GM13977 (cell line): ENCODE measurements at regions of chr3 and their contacts with region 1.

Region 1: DNA sequence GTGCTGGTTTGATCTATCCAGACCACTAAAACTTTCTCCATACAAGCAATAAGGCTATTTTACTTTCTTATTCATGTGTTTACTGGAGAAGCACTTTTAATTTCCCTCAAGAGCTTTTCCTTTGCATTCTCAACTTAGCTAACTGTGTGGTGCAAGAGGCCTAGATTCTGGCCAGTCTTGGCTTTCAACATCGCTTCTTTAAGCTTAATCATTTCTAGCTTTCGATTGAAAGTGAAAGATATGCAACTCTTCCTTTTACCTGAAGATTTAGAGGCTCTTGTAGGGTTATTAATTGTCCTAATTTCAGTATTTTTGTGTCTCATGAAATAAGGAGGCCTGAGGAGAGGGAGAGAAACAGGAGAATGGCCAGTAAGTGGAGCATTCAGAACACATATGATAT is 234.8 kb upstream of the GADL1 start:
- DNase-seq: no peak
- CTCF ChIP-seq: no peak

Region 2: GRCh38 chr3:30768703-30769685 is 360.2 kb before region 1 on chr3:
- in situ Hi-C with region 1: loop called (anchors 10 kb)
- DNase-seq: peak; percentile 30
- CTCF ChIP-seq: peak; percentile 80

Region 3: DNA sequence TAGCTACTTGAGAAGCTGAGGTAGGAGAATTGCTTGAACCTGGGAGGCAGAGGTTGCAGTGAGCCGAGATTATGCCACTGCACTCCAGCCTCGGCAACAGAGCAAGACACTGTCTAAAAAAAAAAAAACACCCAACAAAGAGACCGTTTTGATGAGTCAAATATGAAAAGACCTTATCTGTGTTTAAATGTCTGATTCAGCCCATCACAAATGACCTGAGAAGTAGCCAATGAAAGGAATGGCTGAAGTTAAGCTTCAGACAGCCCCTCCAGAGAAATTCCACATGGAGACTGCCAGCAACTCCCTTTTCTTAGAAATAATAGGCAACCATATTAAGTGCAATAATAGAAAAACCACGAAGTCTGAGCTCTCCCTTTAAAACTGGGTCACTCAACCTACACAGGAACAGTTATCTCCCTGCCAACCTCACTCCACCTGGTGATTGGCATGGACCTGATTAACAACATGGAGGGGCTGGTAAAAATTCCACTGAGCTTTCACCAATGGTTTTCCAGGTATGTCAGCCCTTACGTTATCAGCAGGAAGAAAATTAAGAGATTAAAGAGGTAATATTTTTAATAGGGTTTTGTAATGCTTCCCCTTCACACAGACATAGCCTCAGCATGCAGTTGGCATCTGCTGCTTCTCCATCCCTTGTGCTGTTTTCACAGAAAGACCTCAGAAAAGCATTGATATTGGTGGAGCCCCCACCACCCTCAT is 165.3 kb after region 1 on chr3:
- in situ Hi-C with region 1: no loop called
- DNase-seq: no peak
- CTCF ChIP-seq: no peak

Region 4: GRCh38 chr3:32226870-32227500 is 1097.7 kb after region 1 on chr3:
- in situ Hi-C with region 1: no loop called
- DNase-seq: no peak
- CTCF ChIP-seq: no peak